ENCODE measurements at regions of chrX and their contacts with region 1.

Region 1: DNA sequence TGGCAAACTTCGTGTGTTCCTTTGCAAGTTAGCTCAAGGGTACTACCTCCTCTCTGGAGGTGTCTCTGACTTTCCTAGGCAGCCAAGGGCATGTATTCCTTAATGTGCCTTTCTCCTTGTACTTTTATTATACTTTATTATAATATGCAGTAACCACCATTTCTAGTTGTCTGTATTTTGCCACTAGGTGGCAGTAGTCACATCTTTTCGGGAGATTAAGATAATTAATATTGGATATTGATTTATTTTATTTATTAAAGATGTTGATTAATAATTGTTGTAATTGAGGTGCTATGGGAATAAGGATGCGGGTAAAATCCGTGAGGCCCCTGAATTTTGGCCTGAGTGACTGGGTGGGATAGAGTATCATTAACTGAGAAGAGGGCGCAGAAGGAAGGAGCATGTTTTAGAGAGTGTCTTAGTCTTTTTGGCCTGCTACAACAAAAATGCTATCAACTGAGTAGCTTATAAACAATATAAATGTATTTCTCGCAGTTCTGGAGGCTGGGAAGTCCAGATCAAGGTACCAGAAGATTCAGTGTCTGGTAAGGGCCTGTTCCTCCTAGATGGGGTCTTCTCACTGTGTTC is 153.3 kb downstream of the TMEM164 start:
- DNase-seq: peak in 2 of 9 experiments; percentile 19 to 34
- ATAC-seq: no peak
- H3K4me3 ChIP-seq: no peak overlapping the region
- H3K4me3 Mint-ChIP-seq: no peak overlapping the region
- H3K27ac ChIP-seq: no peak overlapping the region
- H3K27ac Mint-ChIP-seq: no peak overlapping the region
- H3K4me1 ChIP-seq: no peaks in the 10 kb centered on the region
- H3K4me1 Mint-ChIP-seq: peaks cover 9% of the 10 kb centered on the region
- H3K27me3 ChIP-seq: no peaks in the 10 kb centered on the region
- H3K27me3 Mint-ChIP-seq: no peaks in the 10 kb centered on the region
- CTCF ChIP-seq: peak; percentile 58

Region 2: DNA sequence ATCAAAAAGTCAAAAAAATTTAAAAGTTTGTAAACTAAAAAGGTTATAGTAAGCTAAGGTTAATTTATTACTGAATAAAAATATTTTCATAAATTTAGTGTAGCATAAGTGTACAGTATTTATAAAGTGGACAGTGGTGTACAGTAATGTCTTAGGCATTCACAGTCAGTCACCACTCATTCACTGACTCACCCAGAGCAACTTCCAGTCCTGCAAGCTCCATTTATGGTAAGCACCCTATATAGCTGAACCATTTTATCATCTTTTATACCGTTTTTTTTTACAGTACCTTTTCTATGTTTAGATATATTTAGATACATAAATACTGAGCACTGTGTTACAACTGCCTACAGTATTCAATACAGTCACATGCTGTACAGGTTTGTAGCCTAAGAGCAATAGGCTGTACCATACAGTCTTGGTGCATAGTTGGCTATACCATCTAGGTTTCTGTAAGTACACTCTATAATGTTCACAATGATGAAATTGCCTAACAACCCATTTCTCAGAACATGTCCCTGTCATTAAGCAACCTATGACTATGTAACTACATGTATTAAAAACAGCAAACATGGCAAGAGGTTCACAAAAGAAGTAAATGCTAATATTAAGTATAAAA is 441.8 kb before region 1 on chrX:
- CTCF ChIA-PET with region 1: no interaction called
- POLR2A ChIA-PET with region 1: no interaction called
- intact Hi-C with region 1: loop called in 1 of 2 experiments (anchors 10 kb)
- DNase-seq: no peak
- ATAC-seq: no peak
- H3K4me3 ChIP-seq: no peak overlapping the region
- H3K4me3 Mint-ChIP-seq: no peak overlapping the region
- H3K27ac ChIP-seq: no peak overlapping the region
- H3K27ac Mint-ChIP-seq: no peak overlapping the region
- H3K4me1 ChIP-seq: no peaks in the 10 kb centered on the region
- H3K4me1 Mint-ChIP-seq: peaks cover 42% of the 10 kb centered on the region
- H3K27me3 ChIP-seq: no peaks in the 10 kb centered on the region
- H3K27me3 Mint-ChIP-seq: no peaks in the 10 kb centered on the region
- CTCF ChIP-seq: no peak

Region 3: GRCh38 chrX:110407910-110408545 is 251.8 kb after region 1 on chrX:
- CTCF ChIA-PET with region 1: interaction called, 457 read pairs
- POLR2A ChIA-PET with region 1: interaction called, 3 read pairs
- intact Hi-C with region 1: loop called (anchors 1 kb)
- DNase-seq: peak in 8 of 9 experiments; percentile 13 to 65 (median 49)
- ATAC-seq: peak; percentile 31
- H3K4me3 ChIP-seq: no peak overlapping the region
- H3K4me3 Mint-ChIP-seq: no peak overlapping the region
- H3K27ac ChIP-seq: no peak overlapping the region
- H3K27ac Mint-ChIP-seq: no peak overlapping the region
- H3K4me1 ChIP-seq: no peaks in the 10 kb centered on the region
- H3K4me1 Mint-ChIP-seq: no peaks in the 10 kb centered on the region
- H3K27me3 ChIP-seq: no peaks in the 10 kb centered on the region
- H3K27me3 Mint-ChIP-seq: no peaks in the 10 kb centered on the region
- CTCF ChIP-seq: peak; percentile 43

Region 4: GRCh38 chrX:110412971-110413721 is 256.9 kb after region 1 on chrX:
- CTCF ChIA-PET with region 1: interaction called, 457 read pairs
- POLR2A ChIA-PET with region 1: interaction called, 3 read pairs
- intact Hi-C with region 1: loop called (anchors 1 kb)
- DNase-seq: peak; percentile 37 to 77 (median 62)
- ATAC-seq: peak; percentile 80
- H3K4me3 ChIP-seq: no peak overlapping the region
- H3K4me3 Mint-ChIP-seq: no peak overlapping the region
- H3K27ac ChIP-seq: no peak overlapping the region
- H3K27ac Mint-ChIP-seq: no peak overlapping the region
- H3K4me1 ChIP-seq: no peaks in the 10 kb centered on the region
- H3K4me1 Mint-ChIP-seq: no peaks in the 10 kb centered on the region
- H3K27me3 ChIP-seq: no peaks in the 10 kb centered on the region
- H3K27me3 Mint-ChIP-seq: no peaks in the 10 kb centered on the region
- CTCF ChIP-seq: peak; percentile 57

Region 5: DNA sequence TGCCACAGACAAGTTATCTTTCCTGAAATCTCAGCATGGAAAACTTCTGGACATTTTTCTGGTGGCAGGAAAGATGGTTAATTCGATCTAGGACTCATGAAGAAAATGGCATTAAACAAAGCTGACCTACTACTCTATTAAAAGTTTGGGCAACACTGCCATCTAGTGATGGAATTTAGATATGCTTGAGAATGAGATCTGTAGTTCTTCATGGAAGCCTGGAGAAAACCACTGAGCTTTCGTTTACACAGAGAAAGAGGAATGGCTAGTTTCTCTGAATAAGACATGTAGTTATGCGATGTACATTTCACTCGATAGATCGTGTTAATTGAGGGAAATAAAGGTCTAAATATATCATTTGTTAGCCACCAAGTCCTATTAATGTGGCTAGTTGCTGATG is 691.1 kb after region 1 on chrX:
- CTCF ChIA-PET with region 1: no interaction called
- POLR2A ChIA-PET with region 1: no interaction called
- intact Hi-C with region 1: loop called in 1 of 2 experiments (anchors 5 kb)
- DNase-seq: peak in 3 of 9 experiments; percentile 7 to 52 (median 44)
- ATAC-seq: no peak
- H3K4me3 ChIP-seq: no peak overlapping the region
- H3K4me3 Mint-ChIP-seq: no peak overlapping the region
- H3K27ac ChIP-seq: no peak overlapping the region
- H3K27ac Mint-ChIP-seq: no peak overlapping the region
- H3K4me1 ChIP-seq: no peaks in the 10 kb centered on the region
- H3K4me1 Mint-ChIP-seq: no peaks in the 10 kb centered on the region
- H3K27me3 ChIP-seq: no peaks in the 10 kb centered on the region
- H3K27me3 Mint-ChIP-seq: no peaks in the 10 kb centered on the region
- CTCF ChIP-seq: peak; percentile 49

Measured in CD8-positive, alpha-beta T cell (primary cell).